Naive thymus-derived CD4-positive, alpha-beta T cell (primary cell): ENCODE measurements at regions of chr4 and their contacts with region 1.

Region 1: GRCh38 chr4:85084380-85085094 is 118.0 kb upstream of the WDFY3 start:
- DNase-seq: peak in 3 of 9 donors; percentile 4 to 23 (median 21)
- ATAC-seq: no peak
- H3K4me3 ChIP-seq: no peak overlapping the region
- H3K4me3 Mint-ChIP-seq: no peak overlapping the region
- H3K27ac ChIP-seq: no peak overlapping the region
- H3K27ac Mint-ChIP-seq: no peak overlapping the region
- H3K4me1 ChIP-seq: no peaks in the 10 kb centered on the region
- H3K4me1 Mint-ChIP-seq: no peaks in the 10 kb centered on the region
- H3K27me3 ChIP-seq: no peaks in the 10 kb centered on the region
- H3K27me3 Mint-ChIP-seq: peaks cover 0 to 2% (median 0%) of the 10 kb centered on the region in 5 donors

Region 2: DNA sequence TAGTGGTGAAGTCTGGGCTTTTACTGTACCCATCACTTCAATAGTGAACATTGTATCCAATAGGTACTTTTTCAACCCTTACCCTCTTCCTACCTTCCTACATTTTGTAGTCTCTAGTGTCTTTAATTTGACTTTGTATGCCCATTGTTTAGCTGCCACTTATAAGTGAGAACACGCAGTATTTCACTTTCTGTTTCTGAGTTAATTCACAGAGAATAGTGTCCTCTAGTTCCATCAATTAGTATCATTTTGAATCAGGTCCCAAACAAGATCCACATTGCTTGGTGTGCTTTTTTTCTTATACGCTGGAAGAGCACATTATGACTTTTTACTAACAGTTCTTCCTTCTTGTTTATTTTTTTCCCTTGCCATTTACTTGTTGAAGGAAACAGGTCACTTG is 57.9 kb after region 1 on chr4:
- CTCF ChIA-PET with region 1: no interaction called
- POLR2A ChIA-PET with region 1: no interaction called
- intact Hi-C with region 1: no loop called
- DNase-seq: no peak
- ATAC-seq: no peak
- H3K4me3 ChIP-seq: no peak overlapping the region
- H3K4me3 Mint-ChIP-seq: no peak overlapping the region
- H3K27ac ChIP-seq: no peak overlapping the region
- H3K27ac Mint-ChIP-seq: no peak overlapping the region
- H3K4me1 ChIP-seq: no peaks in the 10 kb centered on the region
- H3K4me1 Mint-ChIP-seq: no peaks in the 10 kb centered on the region
- H3K27me3 ChIP-seq: no peaks in the 10 kb centered on the region
- H3K27me3 Mint-ChIP-seq: peaks cover 0 to 12% (median 0%) of the 10 kb centered on the region in 5 donors

Region 3: DNA sequence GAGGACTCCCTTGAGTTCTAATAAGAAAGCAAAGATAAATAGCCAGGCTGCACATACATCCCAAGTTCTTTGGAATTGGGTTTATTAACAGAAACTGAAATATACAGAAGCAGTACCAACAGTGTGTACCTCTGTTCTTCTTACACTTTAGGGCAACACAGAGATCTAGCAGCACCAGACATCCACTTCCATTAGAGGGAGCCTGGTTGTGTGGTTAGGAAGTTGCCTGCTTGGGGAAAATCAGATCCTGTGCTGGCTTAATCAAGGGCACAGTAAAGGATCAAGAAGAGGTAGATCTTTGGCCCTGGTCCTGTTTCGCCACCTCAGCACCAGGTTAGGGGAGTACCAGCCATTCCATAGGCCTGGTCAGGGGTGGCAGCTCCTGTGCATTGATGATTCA is 159.3 kb after region 1 on chr4:
- CTCF ChIA-PET with region 1: no interaction called
- POLR2A ChIA-PET with region 1: no interaction called
- intact Hi-C with region 1: no loop called
- DNase-seq: no peak
- ATAC-seq: no peak
- H3K4me3 ChIP-seq: no peak overlapping the region
- H3K4me3 Mint-ChIP-seq: no peak overlapping the region
- H3K27ac ChIP-seq: no peak overlapping the region
- H3K27ac Mint-ChIP-seq: no peak overlapping the region
- H3K4me1 ChIP-seq: no peaks in the 10 kb centered on the region
- H3K4me1 Mint-ChIP-seq: no peaks in the 10 kb centered on the region
- H3K27me3 ChIP-seq: no peaks in the 10 kb centered on the region
- H3K27me3 Mint-ChIP-seq: no peaks in the 10 kb centered on the region

Region 4: GRCh38 chr4:85274958-85275357 is 190.4 kb after region 1 on chr4:
- CTCF ChIA-PET with region 1: no interaction called
- POLR2A ChIA-PET with region 1: no interaction called
- intact Hi-C with region 1: loop called in 1 of 2 experiments (anchors 5 kb)
- DNase-seq: no peak
- ATAC-seq: no peak
- H3K4me3 ChIP-seq: no peak overlapping the region
- H3K4me3 Mint-ChIP-seq: no peak overlapping the region
- H3K27ac ChIP-seq: no peak overlapping the region
- H3K27ac Mint-ChIP-seq: no peak overlapping the region
- H3K4me1 ChIP-seq: no peaks in the 10 kb centered on the region
- H3K4me1 Mint-ChIP-seq: no peaks in the 10 kb centered on the region
- H3K27me3 ChIP-seq: no peaks in the 10 kb centered on the region
- H3K27me3 Mint-ChIP-seq: no peaks in the 10 kb centered on the region

Region 5: GRCh38 chr4:85302756-85303155 is 218.2 kb after region 1 on chr4:
- CTCF ChIA-PET with region 1: no interaction called
- POLR2A ChIA-PET with region 1: no interaction called
- intact Hi-C with region 1: no loop called
- DNase-seq: no peak
- ATAC-seq: no peak
- H3K4me3 ChIP-seq: no peak overlapping the region
- H3K4me3 Mint-ChIP-seq: no peak overlapping the region
- H3K27ac ChIP-seq: no peak overlapping the region
- H3K27ac Mint-ChIP-seq: no peak overlapping the region
- H3K4me1 ChIP-seq: no peaks in the 10 kb centered on the region
- H3K4me1 Mint-ChIP-seq: no peaks in the 10 kb centered on the region
- H3K27me3 ChIP-seq: no peaks in the 10 kb centered on the region
- H3K27me3 Mint-ChIP-seq: no peaks in the 10 kb centered on the region

Region 6: GRCh38 chr4:86043755-86044592 is 959.4 kb after region 1 on chr4:
- CTCF ChIA-PET with region 1: no interaction called
- POLR2A ChIA-PET with region 1: no interaction called
- intact Hi-C with region 1: loop called in 1 of 2 experiments (anchors 2 kb)
- DNase-seq: peak in 5 of 9 donors; percentile 1 to 19 (median 4)
- ATAC-seq: no peak
- H3K4me3 ChIP-seq: no peak overlapping the region
- H3K4me3 Mint-ChIP-seq: no peak overlapping the region
- H3K27ac ChIP-seq: no peak overlapping the region
- H3K27ac Mint-ChIP-seq: no peak overlapping the region
- H3K4me1 ChIP-seq: no peaks in the 10 kb centered on the region
- H3K4me1 Mint-ChIP-seq: no peaks in the 10 kb centered on the region
- H3K27me3 ChIP-seq: no peaks in the 10 kb centered on the region
- H3K27me3 Mint-ChIP-seq: no peaks in the 10 kb centered on the region